CD4-positive, alpha-beta T cell (primary cell): ENCODE measurements at regions of chr19 and their contacts with region 1.

Region 1: DNA sequence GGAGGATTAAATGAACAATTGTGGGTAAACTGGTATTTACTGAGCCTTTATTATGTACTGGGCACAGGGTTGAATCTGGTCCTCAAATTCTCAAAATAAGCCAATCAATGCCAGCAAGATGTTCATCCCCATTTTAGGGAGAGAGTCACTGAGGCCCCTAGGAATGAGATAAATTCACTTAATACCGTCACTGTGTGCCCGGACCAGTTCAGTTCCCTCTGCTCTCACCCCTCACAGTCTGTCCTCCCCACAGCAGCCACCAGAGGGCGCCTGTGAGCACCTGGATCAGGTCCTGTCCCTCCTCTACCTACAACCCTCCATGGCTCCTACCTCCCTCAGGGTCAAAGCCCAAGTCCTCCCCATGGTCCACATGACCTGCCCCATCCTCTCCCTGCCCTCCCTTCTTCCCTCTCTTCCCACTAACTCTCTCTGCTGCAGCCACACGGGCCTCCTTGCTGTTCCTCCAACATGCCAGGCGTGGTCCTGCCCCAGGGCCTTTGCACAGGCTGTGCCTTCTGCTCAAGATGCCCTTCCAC is 42.0 kb upstream of the NFIC start:
- DNase-seq: peak; percentile 58 to 81 (median 71)
- ATAC-seq: peak; percentile 76
- H3K4me3 ChIP-seq: no peak overlapping the region
- H3K4me3 Mint-ChIP-seq: no peak overlapping the region
- H3K27ac ChIP-seq: no peak overlapping the region
- H3K27ac Mint-ChIP-seq: no peak overlapping the region
- H3K4me1 ChIP-seq: no peaks in the 10 kb centered on the region
- H3K4me1 Mint-ChIP-seq: no peaks in the 10 kb centered on the region
- H3K27me3 ChIP-seq: peaks cover 3 to 11% of the 10 kb centered on the region in 2 experiments
- H3K27me3 Mint-ChIP-seq: peaks cover 19% of the 10 kb centered on the region
- CTCF ChIP-seq: peak; percentile 65

Region 2: DNA sequence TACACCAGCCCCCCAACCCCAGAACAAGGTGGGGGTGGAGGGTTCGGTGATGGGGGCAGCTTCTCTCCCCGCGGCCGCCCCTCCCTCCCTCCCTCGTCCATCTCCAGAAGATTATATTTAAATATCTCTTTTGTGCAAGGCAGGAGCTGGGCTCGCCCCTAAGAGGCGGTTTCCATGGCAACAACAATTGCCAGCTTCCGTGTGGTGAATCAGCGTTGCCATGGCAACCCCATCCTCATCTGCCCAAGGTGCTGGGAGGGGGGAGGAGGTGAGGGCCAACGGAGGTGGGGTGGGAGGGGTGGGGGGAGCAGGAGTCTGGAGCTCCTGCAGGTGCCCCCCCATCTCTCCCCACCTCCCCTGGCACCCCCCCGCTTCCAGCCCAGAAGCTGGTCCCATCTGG is 53.5 kb before region 1 on chr19:
- CTCF ChIA-PET with region 1: no interaction called
- POLR2A ChIA-PET with region 1: no interaction called
- intact Hi-C with region 1: no loop called
- DNase-seq: peak; percentile 20 to 81 (median 48)
- ATAC-seq: no peak
- H3K4me3 ChIP-seq: no peak overlapping the region
- H3K4me3 Mint-ChIP-seq: no peak overlapping the region
- H3K27ac ChIP-seq: no peak overlapping the region
- H3K27ac Mint-ChIP-seq: no peak overlapping the region
- H3K4me1 ChIP-seq: peaks cover 16% of the 10 kb centered on the region
- H3K4me1 Mint-ChIP-seq: peaks cover 13% of the 10 kb centered on the region
- H3K27me3 ChIP-seq: peaks cover 26 to 29% of the 10 kb centered on the region in 2 experiments
- H3K27me3 Mint-ChIP-seq: peaks cover 40% of the 10 kb centered on the region
- CTCF ChIP-seq: no peak

Region 3: GRCh38 chr19:3429581-3430080 is 105.2 kb after region 1 on chr19:
- CTCF ChIA-PET with region 1: interaction called, 24 read pairs
- POLR2A ChIA-PET with region 1: interaction called, 6 read pairs
- intact Hi-C with region 1: loop called (anchors 1 kb)
- DNase-seq: peak; percentile 60 to 85 (median 72)
- ATAC-seq: peak; percentile 92
- H3K4me3 ChIP-seq: no peak overlapping the region
- H3K4me3 Mint-ChIP-seq: no peak overlapping the region
- H3K27ac ChIP-seq: no peak overlapping the region
- H3K27ac Mint-ChIP-seq: no peak overlapping the region
- H3K4me1 ChIP-seq: peaks cover 7% of the 10 kb centered on the region
- H3K4me1 Mint-ChIP-seq: peaks cover 5% of the 10 kb centered on the region
- H3K27me3 ChIP-seq: no peaks in the 10 kb centered on the region
- H3K27me3 Mint-ChIP-seq: no peaks in the 10 kb centered on the region
- CTCF ChIP-seq: peak; percentile 98

Region 4: GRCh38 chr19:3471954-3472655 is 147.7 kb after region 1 on chr19:
- CTCF ChIA-PET with region 1: no interaction called
- POLR2A ChIA-PET with region 1: no interaction called
- intact Hi-C with region 1: loop called in 1 of 2 experiments (anchors 1 kb)
- DNase-seq: peak in 13 of 14 experiments; percentile 11 to 61 (median 30)
- ATAC-seq: no peak
- H3K4me3 ChIP-seq: no peak overlapping the region
- H3K4me3 Mint-ChIP-seq: no peak overlapping the region
- H3K27ac ChIP-seq: no peak overlapping the region
- H3K27ac Mint-ChIP-seq: no peak overlapping the region
- H3K4me1 ChIP-seq: no peaks in the 10 kb centered on the region
- H3K4me1 Mint-ChIP-seq: no peaks in the 10 kb centered on the region
- H3K27me3 ChIP-seq: no peaks in the 10 kb centered on the region
- H3K27me3 Mint-ChIP-seq: no peaks in the 10 kb centered on the region
- CTCF ChIP-seq: peak; percentile 67

Region 5: GRCh38 chr19:3494051-3494450 is 169.7 kb after region 1 on chr19:
- CTCF ChIA-PET with region 1: no interaction called
- POLR2A ChIA-PET with region 1: no interaction called
- intact Hi-C with region 1: loop called in 1 of 2 experiments (anchors 5 kb)
- DNase-seq: peak in 5 of 14 experiments; percentile 20 to 62 (median 31)
- ATAC-seq: peak; percentile 78
- H3K4me3 ChIP-seq: no peak overlapping the region
- H3K4me3 Mint-ChIP-seq: no peak overlapping the region
- H3K27ac ChIP-seq: no peak overlapping the region
- H3K27ac Mint-ChIP-seq: no peak overlapping the region
- H3K4me1 ChIP-seq: peaks cover 18% of the 10 kb centered on the region
- H3K4me1 Mint-ChIP-seq: peaks cover 17% of the 10 kb centered on the region
- H3K27me3 ChIP-seq: no peaks in the 10 kb centered on the region
- H3K27me3 Mint-ChIP-seq: no peaks in the 10 kb centered on the region
- CTCF ChIP-seq: no peak